HCT116 (cell line): ENCODE measurements at regions of chr1 and their contacts with region 1.

Region 1: DNA sequence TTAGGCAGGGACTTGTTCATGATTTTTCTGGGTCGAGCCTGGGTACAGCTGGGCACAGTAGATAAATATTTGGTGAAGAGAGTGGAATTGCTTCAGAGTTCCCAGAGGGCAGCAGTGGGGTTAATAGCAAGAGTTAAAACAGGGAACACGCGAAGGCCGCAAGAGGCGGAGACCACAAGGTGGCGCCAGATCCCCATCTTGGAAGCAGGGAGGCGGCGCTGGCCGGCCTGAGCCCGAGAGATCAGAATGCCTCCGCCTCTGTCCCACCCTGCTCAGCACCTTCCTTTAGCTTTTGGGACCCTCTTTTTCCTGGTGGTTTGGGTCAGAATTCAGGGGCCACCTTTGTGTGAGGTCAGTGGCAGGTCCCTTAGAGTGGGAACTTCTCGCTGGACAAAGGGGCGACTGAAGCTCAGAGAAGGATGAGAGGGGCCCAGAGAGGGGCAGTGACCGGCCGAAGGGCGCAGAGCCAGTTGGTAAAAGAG is 6.5 kb upstream of the PADI2 start:
- DNase-seq: peak; percentile 70
- ATAC-seq: peak; percentile 88
- H3K4me3 ChIP-seq: no peak overlapping the region
- H3K27ac ChIP-seq: no peak overlapping the region
- H3K4me1 ChIP-seq: peaks cover 14 to 38% of the 10 kb centered on the region in 2 experiments
- H3K27me3 ChIP-seq: no peaks in the 10 kb centered on the region
- CTCF ChIP-seq: peak; percentile 92 to 99 (median 94)
- POLR2A ChIP-seq: no peak
- RAD21 ChIP-seq: peak; percentile 100

Region 2: DNA sequence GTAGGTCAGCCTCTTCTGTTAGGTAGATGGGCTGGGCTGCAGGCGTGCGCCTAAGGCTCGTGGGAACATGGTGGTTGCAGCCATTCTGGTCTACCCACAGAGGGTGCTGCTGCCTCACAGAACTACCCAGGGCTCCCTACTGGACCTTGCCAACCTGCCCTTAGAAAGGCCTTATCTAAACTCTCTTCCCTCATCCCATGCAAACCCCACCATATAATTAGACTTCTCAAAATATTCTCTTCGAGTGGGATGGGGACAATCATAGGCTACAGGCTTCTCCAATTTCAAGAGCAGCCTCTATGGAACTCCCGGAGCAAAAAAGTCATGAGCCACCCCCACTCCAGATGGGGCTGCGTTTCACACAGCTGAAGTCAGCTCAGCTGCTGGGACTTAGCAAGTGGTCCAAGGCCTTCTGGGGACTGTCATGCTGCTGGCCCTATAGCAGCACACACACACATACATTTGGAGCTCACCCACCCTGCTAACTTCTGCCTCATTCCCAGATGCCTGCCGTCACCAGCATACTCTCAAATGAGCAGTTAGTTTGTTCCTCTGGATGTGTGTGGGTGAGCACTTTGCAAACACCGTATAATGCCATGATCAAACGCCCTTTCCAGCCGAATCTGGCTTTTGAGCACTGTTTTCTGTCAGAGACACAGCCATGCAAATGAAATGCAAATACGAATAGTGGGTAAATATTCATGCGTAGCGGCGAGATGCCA is 65.9 kb before region 1 on chr1:
- CTCF ChIA-PET with region 1: interaction called, 3 read pairs
- POLR2A ChIA-PET with region 1: no interaction called
- RAD21 ChIA-PET with region 1: no interaction called
- intact Hi-C with region 1: loop called (anchors 2 kb)
- DNase-seq: peak; percentile 59
- ATAC-seq: peak; percentile 100
- H3K4me3 ChIP-seq: no peak overlapping the region
- H3K27ac ChIP-seq: no peak overlapping the region
- H3K4me1 ChIP-seq: peaks cover 0 to 16% of the 10 kb centered on the region in 2 experiments; a peak in 2 of 4 replicates
- H3K27me3 ChIP-seq: no peaks in the 10 kb centered on the region
- CTCF ChIP-seq: peak; percentile 81 to 90 (median 85)
- POLR2A ChIP-seq: no peak
- RAD21 ChIP-seq: peak; percentile 94

Region 3: DNA sequence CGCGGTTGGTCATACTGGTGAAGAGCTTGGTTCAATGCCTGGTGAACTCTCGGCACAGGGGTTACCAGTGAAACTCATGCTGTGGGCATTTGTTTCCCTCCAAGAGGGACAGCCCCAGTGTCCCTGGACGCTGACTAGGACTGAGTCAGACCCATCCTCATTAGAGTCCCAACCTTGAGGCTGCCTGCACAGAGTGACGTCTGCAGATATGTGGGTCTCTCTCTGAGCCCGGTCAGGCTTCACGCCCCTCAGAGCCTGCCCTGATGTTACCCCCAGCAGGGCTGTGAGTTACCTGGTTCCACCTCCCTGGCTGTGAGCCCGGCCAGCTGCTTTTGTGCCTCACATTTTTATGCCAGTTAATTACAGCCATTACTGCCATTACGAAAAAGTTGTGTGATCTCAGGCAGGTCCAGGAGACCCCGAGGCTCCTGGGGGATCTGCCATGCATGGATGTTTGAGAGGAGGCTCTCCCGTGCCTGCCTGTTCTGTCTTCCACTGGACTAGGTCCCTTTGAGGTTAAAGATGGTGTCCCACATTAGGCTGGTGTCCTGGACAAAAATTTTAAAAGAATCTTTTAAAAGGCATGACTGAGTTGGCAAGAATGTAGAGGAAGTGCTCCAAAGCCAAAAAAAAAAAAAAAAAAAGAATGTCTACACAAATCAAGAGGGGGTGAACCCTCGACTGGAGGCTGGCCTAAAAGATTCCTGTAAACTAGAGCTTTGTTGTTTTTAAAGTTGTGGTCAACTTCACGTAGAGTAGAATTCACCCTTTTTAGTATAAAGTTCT is 42.5 kb after region 1 on chr1:
- CTCF ChIA-PET with region 1: no interaction called
- POLR2A ChIA-PET with region 1: no interaction called
- RAD21 ChIA-PET with region 1: no interaction called
- intact Hi-C with region 1: no loop called
- DNase-seq: no peak
- ATAC-seq: no peak
- H3K4me3 ChIP-seq: no peak overlapping the region
- H3K27ac ChIP-seq: no peak overlapping the region
- H3K4me1 ChIP-seq: peaks cover 20 to 24% of the 10 kb centered on the region in 2 experiments
- H3K27me3 ChIP-seq: no peaks in the 10 kb centered on the region
- CTCF ChIP-seq: no peak
- POLR2A ChIP-seq: no peak
- RAD21 ChIP-seq: no peak

Region 4: GRCh38 chr1:17236779-17237560 is 111.2 kb after region 1 on chr1:
- CTCF ChIA-PET with region 1: interaction called, 71 read pairs
- POLR2A ChIA-PET with region 1: interaction called, 10 read pairs
- RAD21 ChIA-PET with region 1: interaction called, 11 to 20 read pairs
- intact Hi-C with region 1: loop called (anchors 1 kb)
- DNase-seq: peak; percentile 85
- ATAC-seq: peak; percentile 70
- H3K4me3 ChIP-seq: no peak overlapping the region
- H3K27ac ChIP-seq: no peak overlapping the region
- H3K4me1 ChIP-seq: peaks cover 29 to 62% of the 10 kb centered on the region in 2 experiments
- H3K27me3 ChIP-seq: peaks cover 11% of the 10 kb centered on the region; the same call in 1 of the 2 replicates
- CTCF ChIP-seq: peak in 2 of 3 experiments; percentile 76 to 88; a peak in 4 of 6 replicates
- POLR2A ChIP-seq: no peak
- RAD21 ChIP-seq: no peak

Region 5: DNA sequence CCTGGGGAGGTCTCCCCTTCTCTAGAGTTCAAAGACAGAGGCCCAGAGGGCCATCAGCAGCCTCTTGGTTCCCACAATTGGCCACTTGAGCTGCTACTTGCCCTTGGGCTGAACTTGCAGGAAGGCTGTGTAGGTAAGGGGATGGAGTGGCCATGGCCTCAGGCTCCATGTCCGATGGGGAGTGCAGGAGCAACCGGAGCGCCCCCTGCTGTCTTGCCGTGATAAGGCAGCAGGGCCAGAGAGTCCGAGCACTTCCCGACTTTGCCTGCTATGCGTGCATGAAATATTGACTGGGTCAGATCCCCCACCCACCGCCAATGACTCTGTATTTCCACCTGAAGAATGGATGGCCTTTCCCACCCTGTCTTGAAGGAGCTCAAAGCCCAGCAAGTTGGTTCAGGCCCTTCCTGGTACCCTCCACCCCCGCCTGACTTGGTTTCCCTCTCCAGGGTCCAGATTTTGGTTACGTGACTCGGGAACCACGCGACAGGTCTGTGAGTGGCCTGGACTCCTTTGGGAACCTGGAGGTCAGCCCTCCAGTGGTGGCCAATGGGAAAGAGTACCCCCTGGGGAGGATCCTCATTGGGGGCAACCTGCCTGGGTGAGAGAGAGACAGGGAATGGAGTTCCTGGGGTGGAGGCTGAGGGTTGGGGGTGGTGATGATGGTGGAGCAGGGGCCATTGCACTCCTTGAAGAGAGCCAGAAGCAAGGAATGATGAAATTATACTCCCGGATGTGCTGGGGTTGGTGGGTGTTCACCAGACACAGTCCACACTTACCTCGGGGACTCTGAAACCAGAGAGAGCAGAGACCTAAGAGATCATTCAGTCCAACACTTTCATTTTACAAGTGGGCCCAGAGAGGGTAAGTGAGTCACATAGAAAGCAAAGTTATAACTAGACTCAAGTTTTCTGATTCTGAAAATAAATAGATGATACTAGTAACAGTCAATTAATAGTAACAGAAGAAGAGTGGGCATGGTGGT is 148.7 kb after region 1 on chr1:
- CTCF ChIA-PET with region 1: interaction called, 4 read pairs
- POLR2A ChIA-PET with region 1: no interaction called
- RAD21 ChIA-PET with region 1: interaction called in 1 of 2 experiments, 4 read pairs
- intact Hi-C with region 1: loop called (anchors 1 kb)
- DNase-seq: peak; percentile 42
- ATAC-seq: peak; percentile 98
- H3K4me3 ChIP-seq: no peak overlapping the region
- H3K27ac ChIP-seq: no peak overlapping the region
- H3K4me1 ChIP-seq: peaks cover 0 to 12% of the 10 kb centered on the region in 2 experiments; a peak in 2 of 4 replicates
- H3K27me3 ChIP-seq: no peaks in the 10 kb centered on the region
- CTCF ChIP-seq: peak; percentile 77 to 97 (median 89)
- POLR2A ChIP-seq: no peak
- RAD21 ChIP-seq: peak; percentile 86

Region 6: DNA sequence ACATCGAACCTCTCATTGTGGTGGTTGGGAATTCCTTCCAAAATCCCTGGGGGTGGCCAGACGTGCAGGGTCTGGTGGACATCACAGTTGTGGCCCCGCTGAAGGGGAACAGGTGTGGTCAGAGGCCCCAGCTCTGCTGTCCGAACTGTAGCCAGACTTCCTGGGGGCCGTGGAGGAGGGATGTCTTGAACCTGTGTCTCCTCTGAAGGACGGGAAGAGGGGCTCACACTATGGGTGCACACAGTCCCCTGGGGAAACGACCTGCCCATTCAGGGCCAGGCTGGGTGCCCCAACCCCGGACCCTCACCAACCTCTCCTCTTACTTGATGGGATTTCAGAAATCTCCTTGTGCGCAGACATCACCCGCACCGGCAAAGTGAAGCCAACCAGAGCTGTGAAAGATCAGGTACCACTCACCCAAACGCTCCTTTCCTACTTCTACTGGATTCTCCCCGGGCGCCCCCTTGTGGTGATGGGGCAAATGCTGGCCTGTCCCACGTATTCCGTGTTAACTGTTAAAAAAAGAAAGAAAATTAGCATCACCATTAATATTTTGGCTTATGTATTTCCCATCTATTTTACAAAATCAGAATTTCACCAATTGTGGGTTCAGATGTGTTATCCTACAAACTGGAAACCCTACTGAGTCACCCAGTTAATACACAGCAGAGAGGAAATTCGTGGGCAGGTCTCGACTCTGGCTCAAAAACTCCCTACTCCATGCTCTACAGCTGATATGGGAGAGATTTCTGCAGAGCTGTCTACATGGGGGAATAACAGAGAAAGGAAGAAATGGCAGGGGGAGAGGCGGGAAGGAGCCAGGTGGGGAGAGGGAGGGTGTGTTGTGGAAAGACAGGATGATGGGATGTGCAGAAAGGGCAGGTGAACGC is 210.3 kb after region 1 on chr1:
- CTCF ChIA-PET with region 1: interaction called, 12 read pairs
- POLR2A ChIA-PET with region 1: no interaction called
- RAD21 ChIA-PET with region 1: no interaction called
- intact Hi-C with region 1: loop called (anchors 1 kb)
- DNase-seq: peak; percentile 37
- ATAC-seq: peak; percentile 95
- H3K4me3 ChIP-seq: no peak overlapping the region
- H3K27ac ChIP-seq: no peak overlapping the region
- H3K4me1 ChIP-seq: peaks cover 4 to 11% of the 10 kb centered on the region in 2 experiments
- H3K27me3 ChIP-seq: no peaks in the 10 kb centered on the region
- CTCF ChIP-seq: peak; percentile 85 to 97 (median 89)
- POLR2A ChIP-seq: no peak
- RAD21 ChIP-seq: peak; percentile 75

Region 7: GRCh38 chr1:17370618-17371017 is 244.8 kb after region 1 on chr1:
- CTCF ChIA-PET with region 1: no interaction called
- POLR2A ChIA-PET with region 1: no interaction called
- RAD21 ChIA-PET with region 1: no interaction called
- intact Hi-C with region 1: loop called (anchors 10 kb)
- DNase-seq: peak; percentile 37
- ATAC-seq: peak; percentile 95
- H3K4me3 ChIP-seq: no peak overlapping the region
- H3K27ac ChIP-seq: no peak overlapping the region
- H3K4me1 ChIP-seq: peaks cover 0 to 7% of the 10 kb centered on the region in 2 experiments; a peak in 1 of 4 replicates
- H3K27me3 ChIP-seq: peaks cover 3% of the 10 kb centered on the region; the same call in 1 of the 2 replicates
- CTCF ChIP-seq: peak; percentile 63 to 83 (median 78); a peak in 5 of 6 replicates
- POLR2A ChIP-seq: no peak
- RAD21 ChIP-seq: peak; percentile 78

Region 8: GRCh38 chr1:17405898-17406759 is 280.3 kb after region 1 on chr1:
- CTCF ChIA-PET with region 1: interaction called, 5 read pairs
- POLR2A ChIA-PET with region 1: no interaction called
- RAD21 ChIA-PET with region 1: no interaction called
- intact Hi-C with region 1: loop called (anchors 1 kb)
- DNase-seq: peak; percentile 22
- ATAC-seq: peak; percentile 93
- H3K4me3 ChIP-seq: no peak overlapping the region
- H3K27ac ChIP-seq: no peak overlapping the region
- H3K4me1 ChIP-seq: no peaks in the 10 kb centered on the region
- H3K27me3 ChIP-seq: no peaks in the 10 kb centered on the region
- CTCF ChIP-seq: peak; percentile 55 to 87 (median 83)
- POLR2A ChIP-seq: no peak
- RAD21 ChIP-seq: peak; percentile 75